Activated CD8-positive, alpha-beta T cell treated with anti-CD3 and anti-CD28 coated beads for 36 hours (primary cell): ENCODE measurements at regions of chr3 and their contacts with region 1.

Region 1: DNA sequence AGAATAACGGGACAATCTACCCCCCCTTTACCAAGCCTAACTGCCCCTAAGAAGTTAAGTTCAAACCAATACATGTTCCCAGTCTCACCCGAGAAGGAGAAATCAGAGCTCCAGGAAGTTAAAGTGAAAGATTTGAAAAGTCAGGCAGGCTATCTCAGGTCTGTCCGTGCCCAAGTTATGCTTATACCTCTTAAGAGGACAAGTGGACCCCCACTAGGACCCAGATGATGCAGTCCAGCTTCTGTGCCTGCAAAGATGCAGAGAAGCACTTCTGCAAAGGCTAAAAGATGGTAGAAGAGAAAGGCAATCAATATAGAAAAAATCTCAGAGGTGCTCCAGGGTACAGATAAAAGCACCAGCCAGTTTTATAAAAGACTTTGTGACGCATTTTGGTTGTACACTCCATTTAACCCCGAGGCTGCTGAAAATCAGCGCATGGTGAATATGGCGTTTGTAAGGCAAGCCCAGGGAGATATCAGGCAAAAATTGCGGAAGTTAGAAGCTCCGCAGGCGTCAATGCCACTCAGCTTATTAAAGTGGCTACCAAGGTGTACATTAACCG is 9.8 kb upstream of the SLC9C1 start:
- DNase-seq: peak; percentile 31
- ATAC-seq: peak; percentile 65
- H3K4me3 Mint-ChIP-seq: no peak overlapping the region
- H3K27ac Mint-ChIP-seq: no peak overlapping the region
- H3K4me1 Mint-ChIP-seq: peaks cover under 1% of the 10 kb centered on the region
- H3K27me3 Mint-ChIP-seq: no peaks in the 10 kb centered on the region
- CTCF ChIP-seq: no peak

Region 2: GRCh38 chr3:112136959-112137693 is 166.7 kb before region 1 on chr3:
- CTCF ChIA-PET with region 1: interaction called, 16 read pairs
- POLR2A ChIA-PET with region 1: interaction called, 4 read pairs
- intact Hi-C with region 1: loop called (anchors 10 kb)
- DNase-seq: peak; percentile 65
- ATAC-seq: no peak
- H3K4me3 Mint-ChIP-seq: no peak overlapping the region
- H3K27ac Mint-ChIP-seq: peak overlapping the region; percentile 44
- H3K4me1 Mint-ChIP-seq: peaks cover 57% of the 10 kb centered on the region
- H3K27me3 Mint-ChIP-seq: no peaks in the 10 kb centered on the region
- CTCF ChIP-seq: peak; percentile 75

Region 3: DNA sequence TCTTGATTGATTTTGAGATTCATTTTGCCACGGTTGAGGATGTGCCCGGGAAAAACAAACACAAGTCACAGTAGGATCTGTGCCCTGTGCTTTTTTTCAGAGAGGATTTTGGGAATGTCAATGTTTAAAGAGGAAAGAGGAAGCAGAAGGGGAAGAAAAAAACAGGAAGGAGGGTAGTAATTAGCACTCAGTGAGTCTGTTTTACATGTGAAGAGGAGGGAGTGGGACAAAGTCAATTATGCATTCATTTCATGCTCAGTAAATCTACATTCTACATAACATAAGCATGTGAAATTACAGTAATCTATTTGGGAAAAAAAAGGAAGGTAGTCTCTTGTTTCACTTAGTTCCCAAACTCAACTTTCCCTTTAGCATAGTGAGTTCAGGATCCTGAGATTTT is 10.8 kb after region 1 on chr3:
- CTCF ChIA-PET with region 1: interaction called, 24 read pairs
- POLR2A ChIA-PET with region 1: interaction called, 4 read pairs
- intact Hi-C with region 1: no loop called
- DNase-seq: no peak
- ATAC-seq: no peak
- H3K4me3 Mint-ChIP-seq: no peak overlapping the region
- H3K27ac Mint-ChIP-seq: no peak overlapping the region
- H3K4me1 Mint-ChIP-seq: no peaks in the 10 kb centered on the region
- H3K27me3 Mint-ChIP-seq: no peaks in the 10 kb centered on the region
- CTCF ChIP-seq: no peak

Region 4: GRCh38 chr3:112321867-112322649 is 18.2 kb after region 1 on chr3:
- CTCF ChIA-PET with region 1: interaction called, 17 read pairs
- POLR2A ChIA-PET with region 1: interaction called, 3 read pairs
- intact Hi-C with region 1: no loop called
- DNase-seq: no peak
- ATAC-seq: no peak
- H3K4me3 Mint-ChIP-seq: no peak overlapping the region
- H3K27ac Mint-ChIP-seq: no peak overlapping the region
- H3K4me1 Mint-ChIP-seq: no peaks in the 10 kb centered on the region
- H3K27me3 Mint-ChIP-seq: peaks cover 3% of the 10 kb centered on the region
- CTCF ChIP-seq: no peak